Posterior vena cava (tissue), 2 donors: ENCODE measurements at regions of chr4 and their contacts with region 1.

Region 1: DNA sequence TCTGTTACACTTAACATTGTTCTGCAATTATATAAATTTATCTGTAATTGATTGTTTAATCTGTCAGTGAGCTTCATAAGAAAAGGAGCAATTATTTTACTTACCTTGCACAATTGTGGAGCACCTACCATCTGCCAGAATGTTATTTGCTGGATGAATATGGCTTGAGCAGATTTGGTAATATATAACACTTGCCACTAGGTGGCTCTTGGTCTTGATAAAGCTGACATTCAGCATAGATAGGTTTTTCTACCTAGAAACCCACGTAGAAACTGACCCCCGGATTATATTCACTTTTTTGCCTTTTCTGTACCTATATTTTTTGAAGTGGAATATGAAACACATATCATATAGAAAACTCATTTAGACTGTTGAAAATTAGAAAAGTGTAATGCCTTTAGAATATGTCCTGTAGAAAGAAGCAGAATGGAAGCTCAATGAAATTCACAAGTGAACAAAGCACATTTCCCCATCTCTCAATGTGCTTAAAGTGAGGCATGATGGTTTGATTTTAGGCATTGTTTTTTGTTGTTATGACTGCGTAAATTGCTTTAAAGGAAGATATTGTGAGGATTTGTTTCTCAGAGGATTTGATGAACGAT is 9.5 kb downstream of the RBPJ start:
- DNase-seq: no peak

Region 2: DNA sequence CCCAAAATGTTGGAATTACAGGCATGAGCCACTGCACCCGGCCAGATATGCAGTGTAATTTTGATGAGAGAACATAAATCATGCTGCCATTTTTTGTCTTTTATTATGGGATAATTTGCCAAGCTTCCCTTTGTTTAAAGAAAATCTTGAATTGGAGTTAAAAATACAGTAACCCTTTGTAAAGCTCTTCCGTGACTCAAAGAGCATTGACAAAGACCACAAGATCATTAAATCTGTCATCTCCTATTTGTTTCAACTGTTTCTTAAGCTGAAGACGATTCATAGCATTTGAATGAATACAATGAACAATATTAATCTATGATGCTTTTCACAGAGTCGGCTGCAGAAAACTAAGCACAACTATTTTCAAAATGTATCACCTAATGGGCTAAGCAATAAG is 820.6 kb before region 1 on chr4:
- intact Hi-C with region 1: no loop called
- DNase-seq: no peak

Region 3: DNA sequence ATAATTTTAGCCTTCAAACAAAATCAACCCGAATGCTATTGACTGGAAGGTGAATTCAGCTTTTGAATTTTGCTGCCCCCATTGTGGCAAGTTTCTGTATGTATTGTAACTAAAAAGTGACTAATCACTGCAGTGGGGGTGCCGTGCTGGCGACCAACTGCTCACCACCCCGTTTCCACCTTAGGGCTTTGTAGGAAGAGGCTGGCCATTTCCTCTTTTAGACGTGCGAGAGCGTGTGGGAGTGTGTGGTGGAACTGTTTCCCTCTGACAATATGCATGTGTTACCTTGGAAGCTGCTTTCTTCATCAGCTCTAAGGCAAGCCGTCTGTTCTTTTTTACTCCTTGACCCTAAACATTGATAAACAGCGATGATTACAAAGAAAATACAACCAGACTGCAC is 546.3 kb before region 1 on chr4:
- intact Hi-C with region 1: no loop called
- DNase-seq: no peak

Region 4: DNA sequence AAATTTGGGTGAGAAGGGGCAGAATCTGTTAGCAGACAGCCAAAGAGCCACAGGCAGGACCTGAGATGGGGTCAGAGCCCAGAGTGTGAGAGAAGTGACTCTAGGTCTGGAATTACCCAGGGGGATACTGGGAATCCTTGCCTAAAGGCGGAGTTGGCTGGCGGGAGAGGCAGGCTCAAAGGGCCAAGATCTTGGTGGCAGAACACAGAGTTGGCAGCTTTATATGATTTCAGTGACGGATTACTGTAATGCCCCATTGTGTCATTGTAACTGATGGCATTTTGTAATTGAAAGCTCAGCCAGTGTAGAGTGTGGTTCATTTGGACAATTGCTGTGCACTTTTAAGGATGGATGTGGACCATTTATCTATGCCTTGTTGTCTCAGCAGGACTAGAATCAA is 338.9 kb before region 1 on chr4:
- intact Hi-C with region 1: loop called in 1 of 2 experiments (anchors 5 kb)
- DNase-seq: no peak